MCF 10A (cell line): ENCODE measurements at regions of chr10 and their contacts with region 1.

Region 1: DNA sequence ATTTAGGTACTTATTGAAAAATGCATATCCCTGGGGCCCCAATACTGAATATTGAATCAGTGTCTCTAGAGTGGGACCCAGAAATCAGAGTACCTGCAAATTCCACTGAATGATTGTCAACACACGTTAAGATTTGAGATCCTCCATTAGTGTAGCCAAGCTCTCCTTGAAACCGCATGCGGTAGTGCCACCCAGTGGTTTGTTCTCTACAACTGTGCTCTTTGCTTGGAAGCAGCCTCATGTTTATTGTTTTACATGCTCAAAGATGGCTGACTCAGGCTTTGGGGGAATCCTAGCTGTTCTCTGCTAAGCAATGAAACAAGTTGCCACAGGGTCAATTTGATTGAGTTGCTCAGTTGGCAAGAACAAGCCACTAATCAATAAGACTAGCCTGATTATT is 340.2 kb upstream of the CELF2 start:
- DNase-seq: peak; percentile 80
- H3K4me3 Mint-ChIP-seq: no peak overlapping the region
- H3K27ac Mint-ChIP-seq: no peak overlapping the region
- H3K4me1 Mint-ChIP-seq: no peaks in the 10 kb centered on the region
- H3K27me3 Mint-ChIP-seq: no peaks in the 10 kb centered on the region
- CTCF ChIP-seq: peak; percentile 67

Region 2: GRCh38 chr10:9342885-9343570 is 1334.5 kb before region 1 on chr10:
- CTCF ChIA-PET with region 1: interaction called, 14 read pairs
- POLR2A ChIA-PET with region 1: no interaction called
- intact Hi-C with region 1: loop called (anchors 1 kb)
- DNase-seq: peak; percentile 59
- H3K4me3 Mint-ChIP-seq: no peak overlapping the region
- H3K27ac Mint-ChIP-seq: no peak overlapping the region
- H3K4me1 Mint-ChIP-seq: no peaks in the 10 kb centered on the region
- H3K27me3 Mint-ChIP-seq: no peaks in the 10 kb centered on the region
- CTCF ChIP-seq: peak; percentile 67

Region 3: DNA sequence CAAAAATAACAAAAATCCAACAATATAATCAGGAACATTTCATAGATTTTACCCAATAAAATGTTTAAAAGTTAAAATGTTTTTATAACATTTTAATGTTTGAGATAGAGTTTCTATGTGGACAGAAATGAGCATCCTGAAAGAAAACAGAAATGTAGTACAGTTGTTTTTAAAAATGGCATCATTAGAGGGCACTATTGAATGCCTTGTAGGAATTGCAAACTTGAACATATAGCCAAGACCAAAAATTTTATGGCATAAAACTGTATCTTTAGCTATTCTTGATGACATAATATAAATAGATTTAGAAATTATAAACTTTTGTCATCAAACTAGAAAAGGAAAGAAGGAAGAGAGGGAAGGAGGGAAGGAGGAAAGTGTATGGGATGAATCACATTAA is 1250.3 kb before region 1 on chr10:
- CTCF ChIA-PET with region 1: no interaction called
- POLR2A ChIA-PET with region 1: no interaction called
- intact Hi-C with region 1: loop called (anchors 5 kb)
- DNase-seq: no peak
- H3K4me3 Mint-ChIP-seq: no peak overlapping the region
- H3K27ac Mint-ChIP-seq: no peak overlapping the region
- H3K4me1 Mint-ChIP-seq: no peaks in the 10 kb centered on the region
- H3K27me3 Mint-ChIP-seq: no peaks in the 10 kb centered on the region
- CTCF ChIP-seq: no peak

Region 4: DNA sequence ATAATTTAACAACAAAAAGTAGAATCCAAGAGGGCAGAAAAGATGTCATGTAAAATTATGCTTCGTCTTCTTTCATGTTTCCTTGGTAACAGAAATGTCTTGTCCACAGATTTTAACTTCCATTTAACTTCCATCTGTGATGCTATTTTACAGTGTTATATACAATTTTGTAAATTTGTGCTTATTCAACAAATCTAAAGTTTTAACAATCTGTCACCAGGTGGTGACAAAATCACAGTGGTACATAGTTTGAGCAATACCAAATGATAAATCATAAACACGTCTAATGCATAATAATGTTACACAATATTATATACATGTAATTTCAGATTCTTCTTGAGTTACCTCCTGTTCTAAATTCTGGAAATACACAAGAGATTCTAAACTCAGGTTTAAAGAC is 444.2 kb before region 1 on chr10:
- CTCF ChIA-PET with region 1: interaction called, 3 read pairs
- POLR2A ChIA-PET with region 1: interaction called, 3 read pairs
- intact Hi-C with region 1: loop called (anchors 1 kb)
- DNase-seq: peak; percentile 6
- H3K4me3 Mint-ChIP-seq: no peak overlapping the region
- H3K27ac Mint-ChIP-seq: no peak overlapping the region
- H3K4me1 Mint-ChIP-seq: peaks cover 34% of the 10 kb centered on the region
- H3K27me3 Mint-ChIP-seq: no peaks in the 10 kb centered on the region
- CTCF ChIP-seq: peak; percentile 11

Region 5: DNA sequence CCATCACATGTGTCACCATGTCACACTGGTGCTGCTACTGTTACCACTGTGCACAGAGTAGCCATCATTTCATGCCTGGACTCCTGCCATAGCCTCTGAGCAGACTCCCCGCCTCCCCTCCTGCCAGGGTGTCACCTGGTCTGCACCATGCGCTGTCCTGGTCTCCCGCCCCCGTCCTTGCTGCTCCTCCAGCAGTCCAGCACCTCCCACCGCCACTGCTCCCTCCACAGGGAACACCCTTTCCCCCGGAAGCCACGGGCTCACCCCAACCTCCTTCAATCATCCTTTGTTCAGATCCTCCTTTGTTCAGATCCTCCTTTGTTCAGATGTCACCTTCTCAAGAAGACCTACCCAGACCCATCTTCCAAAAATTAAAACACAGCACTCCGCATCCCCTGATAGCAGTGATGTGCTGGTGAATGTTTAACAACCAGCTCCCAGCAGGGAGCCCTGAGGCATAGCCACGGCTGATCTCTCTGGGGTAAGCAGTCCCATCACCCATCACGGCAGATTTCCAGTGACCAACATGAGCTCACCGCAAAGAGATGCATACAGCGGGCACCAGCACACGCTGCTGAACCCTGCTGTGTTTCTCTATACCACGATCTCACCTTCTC is 696.2 kb after region 1 on chr10:
- CTCF ChIA-PET with region 1: no interaction called
- POLR2A ChIA-PET with region 1: no interaction called
- intact Hi-C with region 1: no loop called
- DNase-seq: no peak
- H3K4me3 Mint-ChIP-seq: no peak overlapping the region
- H3K27ac Mint-ChIP-seq: no peak overlapping the region
- H3K4me1 Mint-ChIP-seq: no peaks in the 10 kb centered on the region
- H3K27me3 Mint-ChIP-seq: no peaks in the 10 kb centered on the region
- CTCF ChIP-seq: no peak